Activated CD4-positive, alpha-beta T cell treated with anti-CD3 and anti-CD28 coated beads for 36 hours (primary cell): ENCODE measurements at regions of chr11 and their contacts with region 1.

Region 1: GRCh38 chr11:64916775-64917662 is at the start of gene ATG2A:
- DNase-seq: peak; percentile 99
- ATAC-seq: peak; percentile 99
- H3K4me3 Mint-ChIP-seq: peak within 1 kb of the TSS; percentile 90
- H3K27ac Mint-ChIP-seq: peak within 1 kb of the TSS; percentile 88
- H3K4me1 Mint-ChIP-seq: peaks cover 16% of the 10 kb centered on the region
- H3K27me3 Mint-ChIP-seq: no peaks in the 10 kb centered on the region
- total RNA-seq, gene ATG2A: 15.8 to 16.7 TPM

Region 2: DNA sequence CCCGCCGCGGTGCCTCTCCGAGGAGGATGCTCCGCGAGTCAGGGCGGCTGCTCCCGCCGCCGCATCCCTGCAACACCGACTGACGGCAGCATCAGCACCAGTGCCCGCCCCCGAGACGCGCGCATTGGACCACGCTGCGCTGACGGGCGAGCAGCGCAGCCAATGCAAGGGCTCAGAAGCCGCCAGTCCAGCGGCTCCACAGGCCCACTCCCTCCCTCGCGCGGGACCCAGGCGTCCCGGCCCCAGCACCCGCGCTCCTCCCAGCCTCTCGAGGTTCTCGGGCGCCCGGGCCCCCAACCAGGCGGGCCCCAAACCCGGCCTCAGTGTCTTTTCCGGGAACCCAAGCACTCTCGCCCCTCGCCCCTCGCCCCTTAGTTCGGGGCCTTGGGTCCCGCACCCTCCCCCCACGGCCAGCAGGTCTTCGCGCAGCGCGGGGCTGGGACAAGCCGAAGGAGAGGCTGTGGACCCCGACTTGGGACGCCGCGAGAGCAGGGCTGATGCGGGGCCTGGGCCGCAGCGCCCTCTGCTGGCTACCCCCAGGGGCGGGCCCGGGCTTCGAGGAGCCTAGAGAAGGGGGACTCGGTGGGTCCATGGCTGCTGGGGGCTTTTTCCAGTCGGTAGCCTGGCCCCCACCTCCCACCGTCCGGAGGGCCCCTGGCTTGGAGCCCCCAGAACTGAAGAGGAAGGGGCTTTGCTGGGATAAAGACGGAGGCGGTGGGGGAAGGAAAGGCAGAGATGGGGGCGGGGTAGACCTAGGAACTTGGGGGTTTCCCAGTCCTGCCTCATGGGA is 193.7 kb before region 1 on chr11 and contains the start of gene NRXN2:
- CTCF ChIA-PET with region 1: no interaction called
- POLR2A ChIA-PET with region 1: no interaction called
- intact Hi-C with region 1: loop called in 1 of 2 experiments (anchors 1 kb)
- DNase-seq: peak; percentile 94
- ATAC-seq: peak; percentile 99
- H3K4me3 Mint-ChIP-seq: peak within 1 kb of the TSS; percentile 46
- H3K27ac Mint-ChIP-seq: no peak within 1 kb of the TSS
- H3K4me1 Mint-ChIP-seq: peaks cover 11% of the 10 kb centered on the region
- H3K27me3 Mint-ChIP-seq: peaks cover 19% of the 10 kb centered on the region
- total RNA-seq, gene NRXN2: 0.18 to 0.39 TPM

Region 3: GRCh38 chr11:64810271-64810890 is 106.6 kb before region 1 on chr11 and contains the start of gene MEN1:
- CTCF ChIA-PET with region 1: no interaction called
- POLR2A ChIA-PET with region 1: no interaction called
- intact Hi-C with region 1: loop called in 1 of 2 experiments (anchors 1 kb)
- DNase-seq: peak; percentile 92
- ATAC-seq: peak; percentile 95
- H3K4me3 Mint-ChIP-seq: peak within 1 kb of the TSS; percentile 93
- H3K27ac Mint-ChIP-seq: peak within 1 kb of the TSS; percentile 85
- H3K4me1 Mint-ChIP-seq: peaks cover 21% of the 10 kb centered on the region
- H3K27me3 Mint-ChIP-seq: no peaks in the 10 kb centered on the region
- total RNA-seq, gene MEN1: 34.8 to 38.5 TPM

Region 4: DNA sequence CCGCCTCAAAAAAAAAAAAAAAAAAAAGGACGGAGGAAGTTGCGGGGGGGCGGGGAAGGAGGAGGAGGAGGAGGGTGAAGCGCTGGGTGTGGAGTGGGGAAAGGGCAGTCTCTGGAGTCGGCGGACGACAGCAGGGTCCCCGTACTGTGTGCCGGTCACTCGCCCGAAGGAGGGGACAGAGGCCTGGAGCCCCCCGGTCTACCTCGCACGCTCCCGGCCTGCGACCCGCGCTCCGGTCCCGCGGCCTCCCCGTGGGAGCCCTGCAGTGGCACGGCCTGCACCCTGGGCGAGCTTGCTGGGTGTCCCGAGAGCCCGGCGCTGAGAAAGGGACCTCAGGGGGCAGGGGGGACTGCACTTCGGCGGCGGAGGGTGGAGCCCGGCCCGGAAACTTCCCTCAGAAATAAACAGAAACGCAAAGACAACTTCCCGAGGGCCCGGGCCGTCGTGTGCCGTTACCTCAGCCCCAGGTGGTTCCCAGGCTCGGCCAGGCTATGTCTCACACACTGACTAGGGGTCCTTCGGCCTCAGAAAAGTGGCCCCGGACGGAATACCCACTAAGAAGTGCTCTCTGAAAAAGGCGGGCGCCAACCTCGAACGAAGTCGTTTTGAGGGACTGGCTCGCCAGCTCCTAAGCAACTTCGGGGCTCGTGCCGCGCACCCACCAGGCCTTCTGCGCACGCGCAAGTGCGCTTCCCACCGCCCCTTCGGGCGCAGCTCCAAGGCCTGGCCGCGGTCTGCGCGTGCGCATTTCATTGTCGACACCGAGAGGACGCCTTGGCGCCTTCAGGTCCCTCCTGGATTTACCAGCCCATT is 54.6 kb after region 1 on chr11 and contains the start of gene MAJIN:
- CTCF ChIA-PET with region 1: interaction called, 3 read pairs
- POLR2A ChIA-PET with region 1: no interaction called
- intact Hi-C with region 1: loop called (anchors 1 to 5 kb)
- DNase-seq: peak; percentile 96
- ATAC-seq: peak; percentile 48
- H3K4me3 Mint-ChIP-seq: peak within 1 kb of the TSS; percentile 63
- H3K27ac Mint-ChIP-seq: peak within 1 kb of the TSS; percentile 94
- H3K4me1 Mint-ChIP-seq: peaks cover 42% of the 10 kb centered on the region
- H3K27me3 Mint-ChIP-seq: no peaks in the 10 kb centered on the region
- total RNA-seq, gene MAJIN: 1.2 to 1.6 TPM

Region 5: GRCh38 chr11:65027213-65028067 is 110.4 kb after region 1 on chr11 and contains the start of gene SNX15:
- CTCF ChIA-PET with region 1: no interaction called
- POLR2A ChIA-PET with region 1: no interaction called
- intact Hi-C with region 1: loop called in 1 of 2 experiments (anchors 1 kb)
- DNase-seq: peak; percentile 94
- ATAC-seq: peak; percentile 91
- H3K4me3 Mint-ChIP-seq: peak within 1 kb of the TSS; percentile 73
- H3K27ac Mint-ChIP-seq: peak within 1 kb of the TSS; percentile 86
- H3K4me1 Mint-ChIP-seq: peaks cover 21% of the 10 kb centered on the region
- H3K27me3 Mint-ChIP-seq: no peaks in the 10 kb centered on the region
- total RNA-seq, gene SNX15: 12.1 to 14.2 TPM

Region 6: GRCh38 chr11:65095974-65096806 is 179.2 kb after region 1 on chr11 and contains the start of gene VPS51:
- CTCF ChIA-PET with region 1: no interaction called
- POLR2A ChIA-PET with region 1: no interaction called
- intact Hi-C with region 1: loop called in 1 of 2 experiments (anchors 1 kb)
- DNase-seq: peak; percentile 93
- ATAC-seq: peak; percentile 98
- H3K4me3 Mint-ChIP-seq: peak within 1 kb of the TSS; percentile 92
- H3K27ac Mint-ChIP-seq: peak within 1 kb of the TSS; percentile 94
- H3K4me1 Mint-ChIP-seq: peaks cover 12% of the 10 kb centered on the region
- H3K27me3 Mint-ChIP-seq: no peaks in the 10 kb centered on the region
- total RNA-seq, gene VPS51: 94.3 to 123 TPM

Region 7: GRCh38 chr11:65117216-65118096 is 200.4 kb after region 1 on chr11 and contains the start of gene ZNHIT2:
- CTCF ChIA-PET with region 1: no interaction called
- POLR2A ChIA-PET with region 1: no interaction called
- intact Hi-C with region 1: loop called (anchors 1 to 5 kb)
- DNase-seq: peak; percentile 100
- ATAC-seq: peak; percentile 68
- H3K4me3 Mint-ChIP-seq: peak within 1 kb of the TSS; percentile 88
- H3K27ac Mint-ChIP-seq: peak within 1 kb of the TSS; percentile 95
- H3K4me1 Mint-ChIP-seq: peaks cover 57% of the 10 kb centered on the region
- H3K27me3 Mint-ChIP-seq: no peaks in the 10 kb centered on the region
- total RNA-seq, gene ZNHIT2: 7.1 to 9.7 TPM